Sciatic nerve (tissue), 2 donors: ENCODE measurements at regions of chr4 and their contacts with region 1.

Region 1: GRCh38 chr4:13246107-13246506 is 238.0 kb downstream of the RAB28 start:
- DNase-seq: no peak
- ATAC-seq: no peak

Region 2: GRCh38 chr4:12545813-12546212 is 700.3 kb before region 1 on chr4:
- intact Hi-C with region 1: no loop called
- DNase-seq: no peak
- ATAC-seq: no peak

Region 3: DNA sequence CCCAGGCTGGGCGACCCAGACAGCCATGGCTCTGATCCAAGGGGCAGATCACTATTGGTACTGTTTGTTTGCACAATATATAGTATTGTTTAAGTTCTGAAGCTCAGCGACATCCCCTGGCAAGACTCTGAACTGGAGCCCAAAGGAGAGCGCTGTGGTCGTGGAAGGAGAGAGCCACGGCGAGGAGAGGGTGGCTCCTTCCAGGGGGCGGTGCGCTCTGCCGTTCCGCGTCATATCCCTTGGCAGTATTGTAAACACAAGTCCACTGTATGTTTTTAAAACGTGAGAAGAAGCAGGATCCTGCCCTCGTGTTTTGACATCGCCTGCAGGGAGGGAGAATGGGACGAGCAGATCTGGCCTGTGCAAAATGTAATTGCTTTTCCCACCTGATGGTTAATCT is 52.5 kb after region 1 on chr4:
- intact Hi-C with region 1: loop called (anchors 2 kb)
- DNase-seq: no peak
- ATAC-seq: peak; percentile 22